ENCODE measurements at regions of chr11 and their contacts with region 1.

Region 1: GRCh38 chr11:86244522-86245368 is at the start of gene EED:
- DNase-seq: peak; percentile 88 to 94 (median 92)
- ATAC-seq: peak; percentile 94
- H3K4me3 ChIP-seq: peak within 1 kb of the TSS; percentile 100
- H3K4me3 Mint-ChIP-seq: no peak within 1 kb of the TSS
- H3K27ac ChIP-seq: peak within 1 kb of the TSS; percentile 97
- H3K27ac Mint-ChIP-seq: no peak within 1 kb of the TSS
- H3K4me1 ChIP-seq: peaks cover 32 to 33% of the 10 kb centered on the region in 2 donors
- H3K4me1 Mint-ChIP-seq: peaks cover 0 to 34% (median 1%) of the 10 kb centered on the region in 7 donors
- H3K27me3 ChIP-seq: no peaks in the 10 kb centered on the region
- H3K27me3 Mint-ChIP-seq: peaks cover 0 to 5% (median 0%) of the 10 kb centered on the region in 5 donors
- total RNA-seq, gene EED: 22.2 to 62.4 (median 35.5) TPM

Region 2: DNA sequence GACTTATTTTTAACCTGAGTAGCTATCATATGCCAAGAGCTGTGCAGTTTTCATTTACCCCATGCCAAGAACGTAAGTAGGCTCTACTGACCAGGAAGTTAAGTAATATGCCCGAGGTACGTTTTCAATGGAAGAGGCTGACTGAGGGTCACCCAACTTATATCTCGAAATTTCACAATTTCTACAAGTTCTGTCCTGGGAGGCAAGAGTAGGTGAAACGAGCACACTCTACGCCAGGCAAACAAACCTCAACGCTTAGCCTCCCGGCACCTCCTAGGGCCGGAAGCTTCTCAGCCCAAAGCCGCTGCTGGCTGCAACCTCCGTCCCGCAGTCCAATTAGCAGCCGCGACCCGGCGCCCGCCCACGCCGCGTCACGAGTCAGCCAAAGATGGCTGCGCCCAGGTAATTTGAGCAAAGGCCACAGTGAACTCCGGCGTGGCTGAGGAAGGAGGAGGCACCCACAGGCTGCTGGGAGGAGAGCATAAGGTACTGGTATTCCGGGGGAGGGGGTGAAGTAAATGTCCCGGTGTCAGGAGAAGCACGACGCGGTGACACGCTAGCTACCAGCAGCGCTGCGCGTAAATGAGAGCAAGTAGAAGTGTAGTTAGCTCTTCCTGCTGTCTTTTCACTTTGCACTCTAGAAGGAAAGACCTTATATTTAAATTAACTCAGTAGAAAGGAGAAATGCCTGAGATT is 597.0 kb before region 1 on chr11 and contains the start of gene TMEM126A:
- CTCF ChIA-PET with region 1: no interaction called
- POLR2A ChIA-PET with region 1: interaction called, 7 read pairs
- intact Hi-C with region 1: loop called (anchors 1 to 5 kb)
- DNase-seq: peak; percentile 85 to 92 (median 90)
- ATAC-seq: peak; percentile 99
- H3K4me3 ChIP-seq: peak within 1 kb of the TSS; percentile 83
- H3K4me3 Mint-ChIP-seq: peak within 1 kb of the TSS; percentile 92 to 100 (median 98)
- H3K27ac ChIP-seq: peak within 1 kb of the TSS; percentile 87
- H3K27ac Mint-ChIP-seq: peak within 1 kb of the TSS; percentile 86 to 99 (median 98)
- H3K4me1 ChIP-seq: peaks cover 11 to 14% of the 10 kb centered on the region in 2 donors
- H3K4me1 Mint-ChIP-seq: peaks cover 9 to 48% (median 38%) of the 10 kb centered on the region in 7 donors
- H3K27me3 ChIP-seq: no peaks in the 10 kb centered on the region
- H3K27me3 Mint-ChIP-seq: peaks cover 12 to 29% (median 22%) of the 10 kb centered on the region in 5 donors
- total RNA-seq, gene TMEM126A: 17.8 to 40.8 (median 18.9) TPM

Region 3: GRCh38 chr11:86068951-86069407 is 175.8 kb before region 1 on chr11 and contains the start of gene PICALM:
- CTCF ChIA-PET with region 1: no interaction called
- POLR2A ChIA-PET with region 1: interaction called, 14 read pairs
- intact Hi-C with region 1: loop called (anchors 1 kb)
- DNase-seq: peak; percentile 88 to 96 (median 95)
- ATAC-seq: peak; percentile 93
- H3K4me3 ChIP-seq: peak within 1 kb of the TSS; percentile 82
- H3K4me3 Mint-ChIP-seq: peak within 1 kb of the TSS; percentile 95 to 100 (median 98)
- H3K27ac ChIP-seq: peak within 1 kb of the TSS; percentile 89
- H3K27ac Mint-ChIP-seq: peak within 1 kb of the TSS; percentile 92 to 97 (median 96)
- H3K4me1 ChIP-seq: peaks cover 14 to 16% of the 10 kb centered on the region in 2 donors
- H3K4me1 Mint-ChIP-seq: peaks cover 33 to 39% (median 36%) of the 10 kb centered on the region in 7 donors
- H3K27me3 ChIP-seq: no peaks in the 10 kb centered on the region
- H3K27me3 Mint-ChIP-seq: no peaks in the 10 kb centered on the region
- total RNA-seq, gene PICALM: 96.7 to 230 (median 102) TPM

Region 4: GRCh38 chr11:86081455-86081854 is 163.3 kb before region 1 on chr11:
- CTCF ChIA-PET with region 1: no interaction called
- POLR2A ChIA-PET with region 1: no interaction called
- intact Hi-C with region 1: no loop called
- DNase-seq: no peak
- ATAC-seq: no peak
- H3K4me3 ChIP-seq: no peak overlapping the region
- H3K4me3 Mint-ChIP-seq: no peak overlapping the region
- H3K27ac ChIP-seq: no peak overlapping the region
- H3K27ac Mint-ChIP-seq: no peak overlapping the region
- H3K4me1 ChIP-seq: no peaks in the 10 kb centered on the region
- H3K4me1 Mint-ChIP-seq: no peaks in the 10 kb centered on the region
- H3K27me3 ChIP-seq: no peaks in the 10 kb centered on the region
- H3K27me3 Mint-ChIP-seq: peaks cover 0 to 8% (median 0%) of the 10 kb centered on the region in 5 donors

Region 5: DNA sequence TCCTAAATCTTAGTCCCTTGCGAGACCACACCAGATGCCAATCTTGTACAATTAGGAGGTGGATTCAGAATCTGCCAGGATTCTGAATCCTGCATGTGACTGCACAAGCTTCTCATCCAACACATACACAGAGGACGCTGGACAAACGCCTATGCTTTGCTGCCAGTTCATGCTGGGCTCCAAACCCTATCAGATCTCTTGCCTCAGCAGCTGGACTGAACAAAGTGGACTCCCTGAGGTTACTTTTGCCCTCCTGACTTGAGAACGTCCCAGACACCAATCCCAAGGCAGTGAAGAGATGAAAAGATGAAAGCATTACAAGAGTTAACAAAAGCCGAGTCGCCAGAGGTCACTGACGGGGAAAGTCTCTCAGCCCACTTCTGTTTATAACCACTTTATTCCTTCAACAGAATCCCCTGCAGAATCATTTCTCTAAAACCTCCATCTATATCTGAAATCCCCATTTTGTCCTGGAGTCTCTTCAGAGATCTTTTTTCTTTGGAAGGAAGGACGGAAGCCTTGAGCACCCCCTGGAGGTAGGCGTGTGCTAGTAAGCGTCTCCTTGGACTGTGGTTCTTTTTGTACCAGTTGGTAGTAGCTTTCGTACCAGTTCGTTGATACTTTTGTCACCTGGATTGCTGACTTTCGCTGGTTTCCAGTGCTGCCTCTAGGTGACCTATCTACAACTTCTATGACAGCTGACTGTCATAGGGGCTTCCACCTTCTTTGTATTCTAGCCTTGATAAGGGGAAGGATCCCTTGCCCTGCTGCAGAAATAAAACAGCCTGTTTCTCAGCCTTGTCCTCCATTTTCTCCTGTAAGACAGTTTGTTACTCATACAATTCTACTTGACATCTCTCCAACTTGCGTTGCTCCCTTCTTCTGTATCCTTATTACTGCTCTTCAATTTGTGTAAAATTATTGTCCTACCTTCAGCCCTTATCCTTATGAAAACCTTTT is 26.3 kb before region 1 on chr11:
- CTCF ChIA-PET with region 1: no interaction called
- POLR2A ChIA-PET with region 1: no interaction called
- intact Hi-C with region 1: loop called in 1 of 2 experiments (anchors 1 kb)
- DNase-seq: peak in 8 of 9 donors; percentile 17 to 54 (median 42)
- ATAC-seq: peak; percentile 92
- H3K4me3 ChIP-seq: peak overlapping the region; percentile 32
- H3K4me3 Mint-ChIP-seq: peak overlapping the region; percentile 32 to 79 (median 67)
- H3K27ac ChIP-seq: no peak overlapping the region
- H3K27ac Mint-ChIP-seq: peak overlapping the region in 2 of 9 donors; percentile 44 to 45
- H3K4me1 ChIP-seq: no peaks in the 10 kb centered on the region
- H3K4me1 Mint-ChIP-seq: peaks cover 4 to 42% (median 12%) of the 10 kb centered on the region in 7 donors
- H3K27me3 ChIP-seq: no peaks in the 10 kb centered on the region
- H3K27me3 Mint-ChIP-seq: peaks cover 0 to 12% (median 5%) of the 10 kb centered on the region in 5 donors

Region 6: DNA sequence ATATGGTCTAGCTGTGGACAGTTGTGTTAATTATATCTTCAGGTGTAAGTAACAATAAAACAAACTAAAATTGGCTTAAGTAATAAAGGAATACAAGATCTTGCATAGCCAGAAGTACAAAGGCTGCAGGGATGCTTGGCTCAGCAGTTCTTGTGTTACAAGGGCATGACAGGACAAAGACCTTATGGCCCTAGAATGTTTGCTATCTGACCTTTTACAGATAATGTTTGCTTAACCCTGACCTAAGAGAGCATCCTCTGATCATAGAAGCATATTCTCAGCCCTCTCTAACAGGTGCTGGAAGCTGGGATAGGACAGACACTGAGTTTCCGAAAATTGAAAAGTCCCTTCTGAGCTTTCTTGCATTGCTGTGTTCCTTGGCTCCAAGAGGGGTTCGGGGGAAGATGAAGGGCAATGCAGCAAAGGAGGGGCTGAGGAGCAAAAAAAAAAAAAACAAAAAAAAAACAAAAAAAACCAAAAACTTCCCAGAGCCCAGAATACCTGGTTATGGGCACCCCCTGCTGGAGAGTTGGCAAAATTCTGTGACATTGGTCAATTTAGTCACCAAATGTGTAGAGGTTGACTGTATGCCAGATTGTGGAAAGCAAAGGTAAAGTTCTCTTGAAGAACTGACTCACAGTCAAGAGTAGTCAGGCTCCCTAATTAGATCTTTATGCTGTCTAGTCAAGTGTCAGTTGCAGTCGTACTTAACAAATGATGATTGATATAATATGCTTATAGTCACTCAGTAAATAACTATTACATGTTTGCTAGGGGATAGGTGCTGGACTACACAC is 46.9 kb after region 1 on chr11:
- CTCF ChIA-PET with region 1: no interaction called
- POLR2A ChIA-PET with region 1: no interaction called
- intact Hi-C with region 1: loop called in 1 of 2 experiments (anchors 1 kb)
- DNase-seq: peak; percentile 11 to 63 (median 49)
- ATAC-seq: peak; percentile 76
- H3K4me3 ChIP-seq: no peak overlapping the region
- H3K4me3 Mint-ChIP-seq: peak overlapping the region in 1 of 10 donors; percentile 23
- H3K27ac ChIP-seq: no peak overlapping the region
- H3K27ac Mint-ChIP-seq: peak overlapping the region in 1 of 9 donors; percentile 35
- H3K4me1 ChIP-seq: peaks cover 0 to 27% of the 10 kb centered on the region in 2 donors
- H3K4me1 Mint-ChIP-seq: peaks cover 5 to 47% (median 9%) of the 10 kb centered on the region in 7 donors
- H3K27me3 ChIP-seq: no peaks in the 10 kb centered on the region
- H3K27me3 Mint-ChIP-seq: no peaks in the 10 kb centered on the region

Region 7: GRCh38 chr11:86403458-86403857 is 158.7 kb after region 1 on chr11:
- CTCF ChIA-PET with region 1: no interaction called
- POLR2A ChIA-PET with region 1: no interaction called
- intact Hi-C with region 1: no loop called
- DNase-seq: no peak
- ATAC-seq: no peak
- H3K4me3 ChIP-seq: no peak overlapping the region
- H3K4me3 Mint-ChIP-seq: no peak overlapping the region
- H3K27ac ChIP-seq: no peak overlapping the region
- H3K27ac Mint-ChIP-seq: no peak overlapping the region
- H3K4me1 ChIP-seq: no peaks in the 10 kb centered on the region
- H3K4me1 Mint-ChIP-seq: no peaks in the 10 kb centered on the region
- H3K27me3 ChIP-seq: no peaks in the 10 kb centered on the region
- H3K27me3 Mint-ChIP-seq: no peaks in the 10 kb centered on the region

Measured in naive thymus-derived CD4-positive, alpha-beta T cell (primary cell).